A549 (cell line): ENCODE measurements at regions of chr12 and their contacts with region 1.

Region 1: DNA sequence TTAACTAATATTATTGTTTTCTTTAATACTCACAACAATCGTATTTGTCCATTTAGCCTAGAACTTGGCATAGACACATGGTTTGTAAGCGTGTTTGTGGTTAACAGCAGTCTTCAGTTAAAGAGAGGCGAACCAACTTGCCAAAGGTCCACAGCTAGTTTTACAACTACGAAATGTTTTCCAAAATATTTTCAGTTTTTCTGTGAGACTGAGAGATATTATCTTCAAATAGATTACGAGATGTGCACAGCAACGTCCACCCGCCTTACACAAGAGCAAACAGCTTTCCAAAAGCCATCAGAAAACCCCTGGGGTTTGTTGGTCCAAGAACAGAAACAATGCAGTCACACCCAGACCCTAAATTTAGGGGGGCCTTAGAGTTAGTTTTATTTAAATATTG is 58.6 kb upstream of the RASSF3 start:
- DNase-seq: no peak
- ATAC-seq: no peak
- H3K4me3 ChIP-seq: no peak overlapping the region
- H3K27ac ChIP-seq: no peak overlapping the region
- H3K4me1 ChIP-seq: 0 out of 3 replicates have a peak, but pooled peaks cover 4% of the 10 kb centered on the region
- CTCF ChIP-seq: no peak
- EP300 ChIP-seq: no peak
- POLR2A ChIP-seq: no peak
- RAD21 ChIP-seq: no peak

Region 2: DNA sequence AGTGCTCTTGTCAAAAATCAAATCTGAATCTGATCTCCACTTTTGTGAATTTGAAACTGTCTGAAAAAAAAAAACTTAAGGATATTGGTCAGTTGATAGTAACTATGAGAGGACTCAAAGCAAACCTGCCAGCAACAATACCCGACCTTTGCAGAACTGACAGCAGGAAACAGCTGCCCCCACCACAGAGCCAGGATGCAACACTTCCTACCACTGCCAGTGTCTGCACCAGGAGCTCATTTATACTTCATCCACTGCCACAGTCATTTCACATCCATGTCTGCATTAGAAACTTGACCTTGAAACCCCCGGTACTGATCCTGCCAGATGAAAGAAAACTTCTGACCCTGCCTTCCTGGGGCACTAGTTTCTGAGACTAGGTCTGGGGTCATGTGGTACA is 799.4 kb before region 1 on chr12:
- CTCF ChIA-PET with region 1: no interaction called
- POLR2A ChIA-PET with region 1: no interaction called
- DNase-seq: no peak
- ATAC-seq: no peak
- H3K4me3 ChIP-seq: no peak overlapping the region
- H3K27ac ChIP-seq: no peak overlapping the region
- H3K4me1 ChIP-seq: no peaks in the 10 kb centered on the region
- CTCF ChIP-seq: no peak
- EP300 ChIP-seq: no peak
- POLR2A ChIP-seq: no peak
- RAD21 ChIP-seq: no peak

Region 3: GRCh38 chr12:64538121-64538520 is 13.6 kb before region 1 on chr12:
- CTCF ChIA-PET with region 1: interaction called, 22 read pairs
- POLR2A ChIA-PET with region 1: no interaction called
- DNase-seq: no peak
- ATAC-seq: no peak
- H3K4me3 ChIP-seq: no peak overlapping the region
- H3K27ac ChIP-seq: no peak overlapping the region
- H3K4me1 ChIP-seq: no peaks in the 10 kb centered on the region
- CTCF ChIP-seq: no peak
- EP300 ChIP-seq: no peak
- POLR2A ChIP-seq: no peak
- RAD21 ChIP-seq: no peak

Region 4: GRCh38 chr12:64582114-64582513 is 30.4 kb after region 1 on chr12:
- CTCF ChIA-PET with region 1: interaction called, 10 read pairs
- POLR2A ChIA-PET with region 1: no interaction called
- DNase-seq: no peak
- ATAC-seq: no peak
- H3K4me3 ChIP-seq: no peak overlapping the region
- H3K27ac ChIP-seq: no peak overlapping the region
- H3K4me1 ChIP-seq: no peaks in the 10 kb centered on the region
- CTCF ChIP-seq: no peak
- EP300 ChIP-seq: no peak
- POLR2A ChIP-seq: no peak
- RAD21 ChIP-seq: no peak

Region 5: GRCh38 chr12:64610149-64610678 is 58.5 kb after region 1 on chr12 and contains the start of gene RASSF3:
- CTCF ChIA-PET with region 1: interaction called, 96 read pairs
- POLR2A ChIA-PET with region 1: no interaction called
- DNase-seq: peak; percentile 53 to 71
- ATAC-seq: peak; percentile 60 to 68
- H3K4me3 ChIP-seq: peak within 1 kb of the TSS; percentile 73
- H3K27ac ChIP-seq: peak within 1 kb of the TSS; percentile 83 to 96
- H3K4me1 ChIP-seq: peaks cover 19% of the 10 kb centered on the region
- CTCF ChIP-seq: no peak
- EP300 ChIP-seq: no peak
- POLR2A ChIP-seq: peak; percentile 54
- RAD21 ChIP-seq: no peak
- polyA plus RNA-seq, gene RASSF3: 35.4 and 40.1 TPM in 2 replicates

Region 6: DNA sequence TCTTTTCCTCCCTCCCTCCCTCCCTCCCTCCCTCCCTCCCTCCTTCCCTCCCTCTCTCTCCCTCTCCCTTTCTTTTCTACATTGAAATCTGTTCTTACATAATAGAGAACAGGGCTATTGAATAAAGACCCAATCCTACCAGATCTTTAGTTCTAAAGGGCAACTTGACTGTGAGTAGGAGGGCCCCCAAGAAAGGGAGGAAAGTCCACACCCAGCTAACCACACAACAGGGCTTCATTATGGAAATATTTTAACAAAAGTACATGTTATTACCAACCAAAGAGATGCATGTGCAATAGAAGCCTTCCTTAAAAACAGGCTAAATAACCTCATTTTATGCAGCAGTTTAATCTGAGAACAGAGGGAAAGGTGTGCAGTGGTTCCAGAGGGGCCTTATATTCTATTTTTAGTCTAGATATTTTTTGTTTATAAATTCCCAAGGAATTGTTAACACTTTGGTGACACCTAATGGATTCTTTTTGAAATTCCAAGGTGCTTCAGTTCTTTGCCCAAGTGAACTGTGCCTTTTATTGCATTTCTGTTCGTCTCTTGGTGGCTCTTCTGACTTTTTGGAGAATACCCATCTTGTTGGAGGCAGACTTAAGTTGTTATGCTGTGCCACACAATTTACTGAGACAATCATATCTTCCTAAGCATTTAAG is 144.5 kb after region 1 on chr12:
- CTCF ChIA-PET with region 1: interaction called, 342 read pairs
- POLR2A ChIA-PET with region 1: no interaction called
- DNase-seq: peak; percentile 42 to 53
- ATAC-seq: peak; percentile 11 to 45; a peak in 3 of 6 replicates
- H3K4me3 ChIP-seq: no peak overlapping the region
- H3K27ac ChIP-seq: peak overlapping the region; percentile 38 to 49; a peak in 5 of 6 replicates
- H3K4me1 ChIP-seq: peaks cover 21% of the 10 kb centered on the region
- CTCF ChIP-seq: peak; percentile 78
- EP300 ChIP-seq: no peak
- POLR2A ChIP-seq: no peak
- RAD21 ChIP-seq: peak; percentile 82 to 92